Lower lobe of right lung (tissue), 2 donors: ENCODE measurements at regions of chr2 and their contacts with region 1.

Region 1: DNA sequence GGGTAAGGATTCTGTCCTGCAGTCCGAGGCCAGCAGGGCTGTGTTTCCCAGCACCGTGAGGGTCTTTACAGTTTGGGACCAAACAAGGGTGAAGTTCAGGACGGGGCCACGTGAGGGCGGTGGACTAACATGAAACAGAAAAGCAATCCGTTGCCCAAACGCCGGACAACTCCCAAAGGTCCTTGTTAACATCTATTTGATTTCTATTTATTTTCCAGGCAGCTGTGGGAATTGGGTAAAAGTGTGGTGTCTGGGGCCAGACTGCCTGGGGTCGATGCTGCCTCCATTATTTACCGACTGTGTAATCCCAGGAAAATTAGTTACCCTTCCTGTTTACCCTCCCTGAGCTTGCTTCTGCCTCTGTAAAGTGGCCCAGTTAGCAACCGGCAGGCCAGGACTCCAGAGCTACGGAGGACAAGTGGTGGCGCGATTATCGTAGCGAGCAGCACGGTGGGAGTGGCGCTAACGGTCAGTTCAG is 66.3 kb upstream of the TCF7L1 start:
- DNase-seq: peak; percentile 80
- ATAC-seq: peak; percentile 85 to 86
- H3K4me3 ChIP-seq: peak overlapping the region; percentile 27
- H3K27ac ChIP-seq: no peak overlapping the region
- H3K4me1 ChIP-seq: peaks cover 10% of the 10 kb centered on the region
- H3K27me3 ChIP-seq: no peaks in the 10 kb centered on the region
- CTCF ChIP-seq: peak; percentile 84

Region 2: DNA sequence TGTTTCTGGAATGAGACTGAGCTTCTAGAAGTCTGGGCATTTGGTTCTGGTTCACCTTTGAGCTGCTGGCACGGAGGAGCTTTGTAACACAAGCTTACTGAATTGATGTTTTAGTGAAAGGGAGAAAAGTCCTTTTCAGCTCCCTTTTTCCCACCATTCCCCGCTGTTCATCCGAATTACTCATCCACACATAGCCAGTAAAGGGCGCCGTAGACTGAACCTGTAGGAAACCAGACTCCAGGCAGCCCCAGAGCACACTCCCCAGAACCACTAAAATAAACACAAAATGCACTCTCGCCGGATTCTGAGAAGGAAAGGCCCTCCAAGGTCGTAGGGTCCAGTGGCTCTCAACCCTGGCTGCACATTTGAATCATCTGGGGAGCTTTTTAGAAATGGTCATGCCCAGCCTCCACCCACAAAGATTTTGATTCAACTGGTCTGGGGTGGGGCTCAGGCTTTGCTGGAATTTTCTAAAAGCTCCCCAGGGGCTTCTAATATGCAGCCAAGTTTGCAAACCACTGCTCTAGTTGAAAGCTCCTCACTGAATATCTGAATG is 95.9 kb after region 1 on chr2:
- intact Hi-C with region 1: no loop called
- DNase-seq: no peak
- ATAC-seq: peak in 1 of 2 donors; percentile 38
- H3K4me3 ChIP-seq: no peak overlapping the region
- H3K27ac ChIP-seq: no peak overlapping the region
- H3K4me1 ChIP-seq: peaks cover 71% of the 10 kb centered on the region
- H3K27me3 ChIP-seq: no peaks in the 10 kb centered on the region
- CTCF ChIP-seq: no peak

Region 3: DNA sequence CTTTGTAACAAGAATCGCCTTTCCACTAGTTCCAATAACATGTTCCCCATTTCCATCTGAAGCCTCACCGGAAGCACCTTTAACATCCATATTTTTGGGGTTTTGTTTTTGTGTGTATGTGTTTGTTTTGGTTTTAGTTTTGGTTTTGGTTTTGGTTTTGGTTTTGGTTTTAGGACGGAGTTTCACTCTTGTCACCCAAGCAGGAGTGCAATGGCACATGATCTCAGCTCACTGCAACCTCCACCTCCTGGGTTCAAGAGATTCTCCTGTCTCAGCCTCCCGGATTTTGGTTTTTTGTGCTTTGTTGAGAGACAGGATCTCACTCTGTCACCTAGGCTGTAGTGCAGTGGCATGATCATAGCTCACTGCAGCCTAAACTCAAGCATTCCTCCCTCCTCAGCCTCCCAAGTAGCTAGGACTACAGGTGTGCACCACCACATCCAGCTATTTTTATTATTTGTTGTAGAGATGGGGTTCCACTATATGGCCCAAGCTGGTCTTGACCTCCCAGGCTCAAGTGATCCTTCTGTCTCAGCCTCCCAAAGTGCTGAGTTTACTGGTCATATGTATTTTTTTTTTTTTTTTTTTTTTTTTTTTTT is 224.6 kb after region 1 on chr2:
- intact Hi-C with region 1: loop called (anchors 10 kb)
- DNase-seq: no peak
- ATAC-seq: no peak
- H3K4me3 ChIP-seq: no peak overlapping the region
- H3K27ac ChIP-seq: peak overlapping the region; percentile 22
- H3K4me1 ChIP-seq: no peaks in the 10 kb centered on the region
- H3K27me3 ChIP-seq: no peaks in the 10 kb centered on the region
- CTCF ChIP-seq: no peak